ENCODE measurements at regions of chr6 and their contacts with region 1.

Region 1: GRCh38 chr6:166365221-166365620 is 17.5 kb downstream of the MPC1 start:
- DNase-seq: no peak
- ATAC-seq: peak; percentile 73
- H3K4me3 ChIP-seq: no peak overlapping the region
- H3K27ac ChIP-seq: no peak overlapping the region
- H3K4me1 ChIP-seq: peaks cover 0 to 1% of the 10 kb centered on the region in 2 donors
- H3K27me3 ChIP-seq: no peaks in the 10 kb centered on the region

Region 2: GRCh38 chr6:166342349-166343149 is 22.7 kb before region 1 on chr6 and contains the start of gene SFT2D1:
- intact Hi-C with region 1: loop called in 1 of 2 experiments (anchors 2 kb)
- DNase-seq: peak; percentile 95 to 97
- ATAC-seq: peak; percentile 97
- H3K4me3 ChIP-seq: peak within 1 kb of the TSS; percentile 82 to 91
- H3K27ac ChIP-seq: peak within 1 kb of the TSS in 1 of 2 donors; percentile 71
- H3K4me1 ChIP-seq: peaks cover 0 to 3% of the 10 kb centered on the region in 2 donors
- H3K27me3 ChIP-seq: no peaks in the 10 kb centered on the region
- total RNA-seq, gene SFT2D1: 36.5 to 37.1 TPM

Region 3: GRCh38 chr6:166382933-166383801 is 17.9 kb after region 1 on chr6 and contains the start of gene MPC1:
- intact Hi-C with region 1: loop called (anchors 2 kb)
- DNase-seq: peak; percentile 97 to 99
- ATAC-seq: peak; percentile 99
- H3K4me3 ChIP-seq: peak within 1 kb of the TSS; percentile 46 to 77
- H3K27ac ChIP-seq: peak within 1 kb of the TSS; percentile 5 to 83
- H3K4me1 ChIP-seq: no peaks in the 10 kb centered on the region
- H3K27me3 ChIP-seq: no peaks in the 10 kb centered on the region
- total RNA-seq, gene MPC1: 36.7 to 71.7 TPM

Region 4: GRCh38 chr6:166598441-166599138 is 233.4 kb after region 1 on chr6:
- intact Hi-C with region 1: no loop called
- DNase-seq: peak in 1 of 2 donors; percentile 81
- ATAC-seq: peak; percentile 78
- H3K4me3 ChIP-seq: no peak overlapping the region
- H3K27ac ChIP-seq: peak overlapping the region in 1 of 2 donors; percentile 58
- H3K4me1 ChIP-seq: no peaks in the 10 kb centered on the region
- H3K27me3 ChIP-seq: no peaks in the 10 kb centered on the region